Mammary epithelial cell (primary cell): ENCODE measurements at regions of chr17 and their contacts with region 1.

Region 1: DNA sequence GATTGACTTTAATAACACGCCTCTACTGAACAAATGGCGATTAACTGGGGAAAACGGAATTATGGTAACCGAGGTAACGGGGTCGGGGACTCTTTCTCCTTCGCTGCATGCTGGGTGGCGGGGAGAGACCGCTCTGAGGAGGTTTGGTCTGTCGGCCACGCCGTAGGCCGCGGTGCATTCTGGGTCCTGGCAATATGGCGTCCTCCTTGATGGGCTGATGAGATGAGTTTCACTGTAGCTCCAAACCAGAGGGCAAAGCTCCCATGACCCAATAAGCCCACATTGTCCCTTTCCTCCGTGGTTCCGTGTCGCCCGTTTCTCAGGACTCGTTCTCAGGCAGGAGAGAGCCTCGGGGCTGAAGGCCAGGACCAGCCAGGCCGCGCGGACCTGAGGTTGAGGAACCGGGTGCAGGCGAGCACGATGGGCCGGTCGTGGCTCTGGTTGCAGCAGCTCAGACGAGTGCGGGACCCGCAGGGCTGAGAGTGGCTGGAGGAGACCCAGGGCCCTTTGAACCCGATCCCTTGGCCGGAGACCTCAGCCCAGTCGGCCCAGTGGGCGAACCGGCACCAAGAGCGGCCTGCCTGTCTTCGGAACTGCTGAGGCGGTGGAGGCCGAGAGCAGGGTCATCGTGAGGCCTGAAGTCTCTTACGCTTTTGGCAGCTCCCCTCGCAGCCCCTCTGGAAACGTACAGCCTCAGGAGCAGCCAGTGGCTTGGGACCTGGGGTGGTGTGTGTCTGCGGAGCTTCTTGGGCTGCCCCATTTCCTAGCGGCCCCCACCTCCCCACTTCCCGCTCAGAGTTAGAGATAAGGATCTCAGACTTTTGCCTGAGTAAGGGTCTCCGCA is at the start of gene RPTOR:
- DNase-seq: peak; percentile 80
- H3K4me3 ChIP-seq: peak within 1 kb of the TSS; percentile 73 to 94 (median 85)
- H3K27ac ChIP-seq: peak within 1 kb of the TSS; percentile 86
- H3K4me1 ChIP-seq: peaks cover 21% of the 10 kb centered on the region
- H3K27me3 ChIP-seq: no peaks in the 10 kb centered on the region
- CTCF ChIP-seq: no peak
- total RNA-seq, gene RPTOR: 35.8 to 36.7 TPM

Region 2: GRCh38 chr17:80477647-80478478 is 67.0 kb before region 1 on chr17:
- CTCF ChIA-PET with region 1: no interaction called
- dilution Hi-C with region 1: no loop called
- in situ Hi-C with region 1: no loop called
- intact Hi-C with region 1: loop called (anchors 2 kb)
- DNase-seq: peak; percentile 35
- H3K4me3 ChIP-seq: peak overlapping the region in 2 of 3 experiments; percentile 30
- H3K27ac ChIP-seq: no peak overlapping the region
- H3K4me1 ChIP-seq: peaks cover 33% of the 10 kb centered on the region
- H3K27me3 ChIP-seq: peaks cover 57% of the 10 kb centered on the region
- CTCF ChIP-seq: peak; percentile 18 to 61

Region 3: GRCh38 chr17:80575057-80575875 is 30.4 kb after region 1 on chr17:
- CTCF ChIA-PET with region 1: no interaction called
- dilution Hi-C with region 1: no loop called
- in situ Hi-C with region 1: no loop called
- intact Hi-C with region 1: no loop called
- DNase-seq: peak; percentile 75
- H3K4me3 ChIP-seq: no peak overlapping the region
- H3K27ac ChIP-seq: peak overlapping the region; percentile 16
- H3K4me1 ChIP-seq: peaks cover 5% of the 10 kb centered on the region
- H3K27me3 ChIP-seq: no peaks in the 10 kb centered on the region
- CTCF ChIP-seq: peak; percentile 100